Activated CD8-positive, alpha-beta T cell treated with anti-CD3 and anti-CD28 coated beads for 36 hours (primary cell): ENCODE measurements at regions of chr5 and their contacts with region 1.

Region 1: DNA sequence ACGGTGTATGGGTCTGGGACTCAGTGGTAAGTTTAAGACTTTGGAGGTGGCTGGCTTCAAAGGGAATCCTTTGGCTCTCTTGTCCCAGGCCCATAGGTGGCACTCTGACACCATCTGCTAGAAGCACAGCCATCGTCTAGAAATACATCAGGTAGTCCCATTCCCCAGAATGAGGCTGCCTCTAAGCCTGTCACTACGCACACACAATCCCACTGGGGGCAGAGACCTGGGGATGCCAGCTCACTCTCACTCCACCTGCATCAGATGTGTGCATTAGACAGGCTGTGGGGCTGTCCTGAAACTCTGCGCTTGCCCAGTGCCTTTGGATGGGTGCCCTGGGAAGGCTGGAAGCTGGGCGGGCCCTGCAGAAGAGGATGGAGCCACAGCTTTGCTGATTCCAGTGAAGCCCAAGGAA is 127.5 kb upstream of the PANK3 start:
- DNase-seq: peak; percentile 40
- ATAC-seq: no peak
- H3K4me3 Mint-ChIP-seq: no peak overlapping the region
- H3K27ac Mint-ChIP-seq: no peak overlapping the region
- H3K4me1 Mint-ChIP-seq: no peaks in the 10 kb centered on the region
- H3K27me3 Mint-ChIP-seq: no peaks in the 10 kb centered on the region
- CTCF ChIP-seq: peak; percentile 24

Region 2: GRCh38 chr5:168550656-168551055 is 156.0 kb before region 1 on chr5:
- CTCF ChIA-PET with region 1: no interaction called
- POLR2A ChIA-PET with region 1: no interaction called
- intact Hi-C with region 1: no loop called
- DNase-seq: no peak
- ATAC-seq: no peak
- H3K4me3 Mint-ChIP-seq: no peak overlapping the region
- H3K27ac Mint-ChIP-seq: no peak overlapping the region
- H3K4me1 Mint-ChIP-seq: no peaks in the 10 kb centered on the region
- H3K27me3 Mint-ChIP-seq: no peaks in the 10 kb centered on the region
- CTCF ChIP-seq: no peak

Region 3: DNA sequence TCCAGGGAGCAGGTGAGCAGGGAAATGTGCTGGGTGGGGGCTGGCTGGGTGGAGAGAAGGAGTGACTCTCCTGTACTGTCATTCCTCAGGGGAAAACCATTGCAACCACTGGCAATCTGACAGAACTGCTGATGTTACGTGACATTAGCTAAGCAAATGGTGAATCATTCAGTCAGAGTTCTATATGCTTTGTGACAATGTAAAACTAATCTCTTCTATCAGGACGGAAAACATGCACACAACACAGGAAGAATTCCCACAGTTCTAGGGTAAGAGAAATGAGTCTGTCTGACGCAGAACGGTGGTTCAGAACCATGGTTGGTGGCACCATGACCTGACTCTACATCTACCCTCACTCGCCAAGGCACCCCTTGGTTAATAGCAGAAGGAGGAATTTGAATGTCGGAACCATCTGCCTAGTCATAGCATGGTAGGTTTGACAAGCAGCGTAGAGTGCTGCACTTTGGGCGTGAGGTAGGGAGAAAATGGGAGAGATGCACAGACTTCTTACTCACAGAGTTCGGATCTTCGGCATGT is 116.2 kb after region 1 on chr5:
- CTCF ChIA-PET with region 1: no interaction called
- POLR2A ChIA-PET with region 1: no interaction called
- intact Hi-C with region 1: no loop called
- DNase-seq: peak; percentile 9
- ATAC-seq: peak; percentile 75
- H3K4me3 Mint-ChIP-seq: no peak overlapping the region
- H3K27ac Mint-ChIP-seq: peak overlapping the region; percentile 51
- H3K4me1 Mint-ChIP-seq: peaks cover 15% of the 10 kb centered on the region
- H3K27me3 Mint-ChIP-seq: peaks cover 2% of the 10 kb centered on the region
- CTCF ChIP-seq: no peak

Region 4: DNA sequence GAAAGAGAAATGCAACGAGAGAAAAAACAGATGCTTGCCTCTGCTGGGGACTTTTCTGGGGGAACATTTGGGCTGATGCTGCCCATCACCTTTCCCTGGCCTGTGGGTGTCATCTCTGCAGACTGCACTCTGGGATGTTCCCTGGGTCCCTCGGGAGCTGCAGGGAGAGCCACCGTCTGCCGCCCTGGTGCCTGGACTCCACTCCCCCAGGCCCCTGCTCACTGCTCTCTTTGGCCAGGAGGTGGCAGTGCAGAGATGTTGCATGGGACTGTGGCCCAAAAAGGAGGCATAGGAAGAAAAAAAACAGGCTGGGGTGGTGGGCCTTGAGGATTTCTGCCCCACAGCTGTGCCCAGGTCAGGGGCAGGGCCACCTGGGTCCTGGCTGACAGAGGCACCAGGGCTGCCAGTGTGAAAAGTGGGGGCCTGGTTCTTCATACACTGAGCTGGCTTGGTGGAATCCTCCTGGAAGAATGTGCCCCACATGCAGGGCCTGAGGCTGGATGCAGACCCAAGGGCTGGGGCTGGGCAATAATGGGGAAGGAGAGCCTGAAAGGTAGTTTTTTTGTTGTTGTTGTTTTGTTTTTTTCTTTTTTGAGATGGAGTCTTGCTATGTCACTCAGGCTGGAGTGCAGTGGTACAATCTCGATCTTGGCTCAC is 240.7 kb after region 1 on chr5:
- CTCF ChIA-PET with region 1: interaction called, 5 read pairs
- POLR2A ChIA-PET with region 1: no interaction called
- intact Hi-C with region 1: loop called (anchors 10 kb)
- DNase-seq: peak; percentile 60
- ATAC-seq: peak; percentile 67
- H3K4me3 Mint-ChIP-seq: no peak overlapping the region
- H3K27ac Mint-ChIP-seq: no peak overlapping the region
- H3K4me1 Mint-ChIP-seq: peaks cover 2% of the 10 kb centered on the region
- H3K27me3 Mint-ChIP-seq: no peaks in the 10 kb centered on the region
- CTCF ChIP-seq: peak; percentile 70